Activated T-helper 1 cell treated with anti-CD3 and anti-CD28 coated beads, Interleukin-12 subunit alpha, Interleukin-12 subunit beta, Interleukin-2, Interleukin-4 antibody, amounts not matched to agents 30 ng/mL and 10 ng/mL and 1 ng/mL, durations not matched to agents 14 hours and 24 hours and 36 hours (primary cell): ENCODE measurements at regions of chr3 and their contacts with region 1.

Region 1: GRCh38 chr3:127590593-127591477 is at the start of gene TPRA1:
- DNase-seq: peak; percentile 81
- H3K4me3 Mint-ChIP-seq: peak within 1 kb of the TSS; percentile 91
- H3K27ac Mint-ChIP-seq: peak within 1 kb of the TSS; percentile 97
- H3K4me1 Mint-ChIP-seq: peaks cover 22% of the 10 kb centered on the region
- H3K27me3 Mint-ChIP-seq: no peaks in the 10 kb centered on the region
- total RNA-seq, gene TPRA1: 37.2 and 41.3 TPM in 2 replicates

Region 2: GRCh38 chr3:126083913-126084767 is 1506.7 kb before region 1 on chr3 and contains the start of gene SLC41A3:
- intact Hi-C with region 1: loop called (anchors 10 kb)
- DNase-seq: peak; percentile 90
- H3K4me3 Mint-ChIP-seq: peak within 1 kb of the TSS; percentile 93
- H3K27ac Mint-ChIP-seq: peak within 1 kb of the TSS; percentile 89
- H3K4me1 Mint-ChIP-seq: peaks cover 26% of the 10 kb centered on the region
- H3K27me3 Mint-ChIP-seq: no peaks in the 10 kb centered on the region
- total RNA-seq, gene SLC41A3: 17.3 and 23.4 TPM in 2 replicates

Region 3: GRCh38 chr3:126703512-126704462 is 887.0 kb before region 1 on chr3 and contains the start of gene CHCHD6:
- intact Hi-C with region 1: loop called (anchors 1 kb)
- DNase-seq: peak; percentile 92
- H3K4me3 Mint-ChIP-seq: peak within 1 kb of the TSS; percentile 96
- H3K27ac Mint-ChIP-seq: peak within 1 kb of the TSS; percentile 85
- H3K4me1 Mint-ChIP-seq: peaks cover 24% of the 10 kb centered on the region
- H3K27me3 Mint-ChIP-seq: peaks cover 40% of the 10 kb centered on the region
- total RNA-seq, gene CHCHD6: 15.7 and 17.5 TPM in 2 replicates

Region 4: GRCh38 chr3:127574880-127575878 is 15.7 kb before region 1 on chr3:
- intact Hi-C with region 1: loop called (anchors 1 kb)
- DNase-seq: peak; percentile 82
- H3K4me3 Mint-ChIP-seq: no peak overlapping the region
- H3K27ac Mint-ChIP-seq: peak overlapping the region; percentile 28
- H3K4me1 Mint-ChIP-seq: peaks cover 7% of the 10 kb centered on the region
- H3K27me3 Mint-ChIP-seq: no peaks in the 10 kb centered on the region

Region 5: DNA sequence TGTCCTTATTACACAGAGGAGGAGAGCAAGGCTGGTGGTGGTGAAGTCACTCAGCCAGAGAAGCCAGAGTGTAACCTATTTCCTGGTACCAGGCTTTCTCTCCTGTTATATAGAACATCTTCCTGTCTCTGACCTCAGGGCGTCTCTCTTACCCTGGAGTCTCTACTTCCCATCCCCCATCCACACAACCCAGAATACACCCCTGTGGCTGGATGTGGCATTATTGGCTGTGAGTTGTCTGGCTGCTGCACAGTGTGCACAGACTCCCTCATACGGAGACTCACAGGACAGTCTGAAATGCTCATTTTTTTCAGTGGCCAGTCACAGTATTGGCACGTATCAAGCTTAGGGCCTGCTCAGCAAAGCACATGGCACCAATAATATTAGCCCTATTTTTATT is 46.7 kb after region 1 on chr3:
- intact Hi-C with region 1: no loop called
- DNase-seq: peak; percentile 59
- H3K4me3 Mint-ChIP-seq: no peak overlapping the region
- H3K27ac Mint-ChIP-seq: peak overlapping the region; percentile 6
- H3K4me1 Mint-ChIP-seq: peaks cover 15% of the 10 kb centered on the region
- H3K27me3 Mint-ChIP-seq: peaks cover 5% of the 10 kb centered on the region

Region 6: GRCh38 chr3:127672516-127673190 is 81.8 kb after region 1 on chr3 and contains the start of gene ABTB1:
- intact Hi-C with region 1: loop called (anchors 1 kb)
- DNase-seq: peak; percentile 82
- H3K4me3 Mint-ChIP-seq: peak within 1 kb of the TSS; percentile 92
- H3K27ac Mint-ChIP-seq: peak within 1 kb of the TSS; percentile 97
- H3K4me1 Mint-ChIP-seq: peaks cover 14% of the 10 kb centered on the region
- H3K27me3 Mint-ChIP-seq: no peaks in the 10 kb centered on the region
- total RNA-seq, gene ABTB1: 9.7 TPM in 2 replicates

Region 7: GRCh38 chr3:128051837-128052594 is 461.2 kb after region 1 on chr3 and contains the start of gene SEC61A1:
- intact Hi-C with region 1: loop called (anchors 1 kb)
- DNase-seq: peak; percentile 96
- H3K4me3 Mint-ChIP-seq: peak within 1 kb of the TSS; percentile 99
- H3K27ac Mint-ChIP-seq: peak within 1 kb of the TSS; percentile 96
- H3K4me1 Mint-ChIP-seq: peaks cover 43% of the 10 kb centered on the region
- H3K27me3 Mint-ChIP-seq: peaks cover 6% of the 10 kb centered on the region
- total RNA-seq, gene SEC61A1: 205 and 214 TPM in 2 replicates

Region 8: GRCh38 chr3:128123538-128124368 is 532.9 kb after region 1 on chr3 and contains the start of gene RUVBL1:
- intact Hi-C with region 1: loop called (anchors 1 kb)
- DNase-seq: peak; percentile 95
- H3K4me3 Mint-ChIP-seq: peak within 1 kb of the TSS; percentile 99
- H3K27ac Mint-ChIP-seq: peak within 1 kb of the TSS; percentile 99
- H3K4me1 Mint-ChIP-seq: peaks cover 24% of the 10 kb centered on the region
- H3K27me3 Mint-ChIP-seq: peaks cover 1% of the 10 kb centered on the region
- total RNA-seq, gene RUVBL1: 135 and 137 TPM in 2 replicates